CD4-positive, alpha-beta memory T cell (primary cell): ENCODE measurements at regions of chr12 and their contacts with region 1.

Region 1: GRCh38 chr12:120686690-120687577 is at the start of gene MLEC:
- DNase-seq: peak; percentile 99 to 100 (median 100)
- H3K4me3 ChIP-seq: peak within 1 kb of the TSS; percentile 85 to 98
- H3K4me3 Mint-ChIP-seq: peak within 1 kb of the TSS; percentile 90 to 96 (median 94)
- H3K27ac ChIP-seq: peak within 1 kb of the TSS; percentile 71
- H3K27ac Mint-ChIP-seq: peak within 1 kb of the TSS; percentile 92 to 97 (median 96)
- H3K4me1 ChIP-seq: peaks cover 41% of the 10 kb centered on the region
- H3K4me1 Mint-ChIP-seq: peaks cover 20 to 52% (median 36%) of the 10 kb centered on the region in 4 donors
- H3K27me3 ChIP-seq: no peaks in the 10 kb centered on the region
- H3K27me3 Mint-ChIP-seq: no peaks in the 10 kb centered on the region
- total RNA-seq, gene MLEC: 75.1 to 88.9 TPM

Region 2: GRCh38 chr12:120317224-120318105 is 369.5 kb before region 1 on chr12:
- CTCF ChIA-PET with region 1: no interaction called
- POLR2A ChIA-PET with region 1: no interaction called
- intact Hi-C with region 1: loop called (anchors 1 kb)
- DNase-seq: peak; percentile 100
- H3K4me3 ChIP-seq: peak overlapping the region; percentile 42 to 65
- H3K4me3 Mint-ChIP-seq: peak overlapping the region; percentile 87 to 95 (median 92)
- H3K27ac ChIP-seq: peak overlapping the region; percentile 81
- H3K27ac Mint-ChIP-seq: peak overlapping the region; percentile 90 to 99 (median 98)
- H3K4me1 ChIP-seq: peaks cover 10% of the 10 kb centered on the region
- H3K4me1 Mint-ChIP-seq: peaks cover 11 to 16% (median 14%) of the 10 kb centered on the region in 4 donors
- H3K27me3 ChIP-seq: no peaks in the 10 kb centered on the region
- H3K27me3 Mint-ChIP-seq: no peaks in the 10 kb centered on the region

Region 3: DNA sequence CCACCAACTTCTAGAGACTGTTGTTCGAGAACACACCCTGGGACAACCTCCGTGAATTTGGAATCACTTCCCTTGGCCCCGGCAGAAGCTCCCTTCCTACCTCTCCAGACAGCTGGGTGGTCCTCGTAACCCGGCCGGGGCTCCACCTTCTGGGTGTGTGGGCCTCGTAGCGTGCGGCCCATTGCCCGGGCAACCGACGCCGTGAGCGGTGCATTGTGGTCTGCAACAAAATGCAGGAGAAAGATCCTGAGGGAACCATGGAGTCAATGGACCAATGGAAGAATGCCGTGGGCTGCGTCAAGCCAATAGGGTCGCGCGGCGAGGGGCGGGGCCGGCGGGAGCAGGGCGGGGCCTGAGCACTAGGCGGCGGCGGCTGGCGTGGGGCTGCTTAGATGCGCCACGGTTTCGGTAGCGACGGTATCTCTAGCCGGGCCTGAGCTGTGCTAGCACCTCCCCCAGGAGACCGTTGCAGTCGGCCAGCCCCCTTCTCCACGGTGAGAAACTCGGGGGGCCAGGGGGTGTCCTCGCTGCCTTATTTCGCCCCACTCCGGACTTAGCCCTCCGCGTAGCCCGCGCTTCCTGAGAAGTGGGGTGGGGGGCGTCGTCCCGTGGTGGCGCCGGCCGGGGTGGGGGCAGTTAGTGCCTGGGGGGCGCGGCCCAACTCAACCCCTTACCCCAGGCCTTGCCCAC is 191.1 kb before region 1 on chr12 and contains the start of gene DYNLL1:
- CTCF ChIA-PET with region 1: no interaction called
- POLR2A ChIA-PET with region 1: interaction called, 4 read pairs
- intact Hi-C with region 1: loop called (anchors 1 kb)
- DNase-seq: peak; percentile 96 to 98 (median 97)
- H3K4me3 ChIP-seq: peak within 1 kb of the TSS; percentile 93 to 94
- H3K4me3 Mint-ChIP-seq: peak within 1 kb of the TSS; percentile 91 to 98 (median 94)
- H3K27ac ChIP-seq: peak within 1 kb of the TSS; percentile 82
- H3K27ac Mint-ChIP-seq: peak within 1 kb of the TSS; percentile 89 to 96 (median 94)
- H3K4me1 ChIP-seq: peaks cover 19% of the 10 kb centered on the region
- H3K4me1 Mint-ChIP-seq: peaks cover 22 to 49% (median 37%) of the 10 kb centered on the region in 4 donors
- H3K27me3 ChIP-seq: no peaks in the 10 kb centered on the region
- H3K27me3 Mint-ChIP-seq: no peaks in the 10 kb centered on the region
- total RNA-seq, gene DYNLL1: 97.5 to 108 TPM

Region 4: GRCh38 chr12:120710031-120710804 is 23.3 kb after region 1 on chr12 and contains the start of gene UNC119B:
- CTCF ChIA-PET with region 1: interaction called, 5 read pairs
- POLR2A ChIA-PET with region 1: interaction called, 17 read pairs
- intact Hi-C with region 1: loop called (anchors 1 kb)
- DNase-seq: peak; percentile 66 to 78 (median 70)
- H3K4me3 ChIP-seq: peak within 1 kb of the TSS; percentile 49 to 68
- H3K4me3 Mint-ChIP-seq: peak within 1 kb of the TSS; percentile 89 to 96 (median 94)
- H3K27ac ChIP-seq: peak within 1 kb of the TSS; percentile 78
- H3K27ac Mint-ChIP-seq: peak within 1 kb of the TSS; percentile 83 to 98 (median 93)
- H3K4me1 ChIP-seq: peaks cover 26% of the 10 kb centered on the region
- H3K4me1 Mint-ChIP-seq: peaks cover 17 to 41% (median 32%) of the 10 kb centered on the region in 4 donors
- H3K27me3 ChIP-seq: no peaks in the 10 kb centered on the region
- H3K27me3 Mint-ChIP-seq: no peaks in the 10 kb centered on the region
- total RNA-seq, gene UNC119B: 28.7 to 29.1 TPM

Region 5: GRCh38 chr12:120904197-120904773 is 217.4 kb after region 1 on chr12 and contains the start of gene SPPL3:
- CTCF ChIA-PET with region 1: no interaction called
- POLR2A ChIA-PET with region 1: interaction called, 3 read pairs
- intact Hi-C with region 1: loop called (anchors 2 kb)
- DNase-seq: peak; percentile 85 to 90 (median 87)
- H3K4me3 ChIP-seq: peak within 1 kb of the TSS; percentile 55 to 76
- H3K4me3 Mint-ChIP-seq: peak within 1 kb of the TSS; percentile 96 to 100 (median 99)
- H3K27ac ChIP-seq: peak within 1 kb of the TSS; percentile 76
- H3K27ac Mint-ChIP-seq: peak within 1 kb of the TSS; percentile 91 to 99 (median 98)
- H3K4me1 ChIP-seq: peaks cover 25% of the 10 kb centered on the region
- H3K4me1 Mint-ChIP-seq: peaks cover 21 to 39% (median 32%) of the 10 kb centered on the region in 4 donors
- H3K27me3 ChIP-seq: no peaks in the 10 kb centered on the region
- H3K27me3 Mint-ChIP-seq: no peaks in the 10 kb centered on the region
- total RNA-seq, gene SPPL3: 45.0 to 49.4 TPM